SK-N-SH (cell line): ENCODE measurements at regions of chr11 and their contacts with region 1.

Region 1: DNA sequence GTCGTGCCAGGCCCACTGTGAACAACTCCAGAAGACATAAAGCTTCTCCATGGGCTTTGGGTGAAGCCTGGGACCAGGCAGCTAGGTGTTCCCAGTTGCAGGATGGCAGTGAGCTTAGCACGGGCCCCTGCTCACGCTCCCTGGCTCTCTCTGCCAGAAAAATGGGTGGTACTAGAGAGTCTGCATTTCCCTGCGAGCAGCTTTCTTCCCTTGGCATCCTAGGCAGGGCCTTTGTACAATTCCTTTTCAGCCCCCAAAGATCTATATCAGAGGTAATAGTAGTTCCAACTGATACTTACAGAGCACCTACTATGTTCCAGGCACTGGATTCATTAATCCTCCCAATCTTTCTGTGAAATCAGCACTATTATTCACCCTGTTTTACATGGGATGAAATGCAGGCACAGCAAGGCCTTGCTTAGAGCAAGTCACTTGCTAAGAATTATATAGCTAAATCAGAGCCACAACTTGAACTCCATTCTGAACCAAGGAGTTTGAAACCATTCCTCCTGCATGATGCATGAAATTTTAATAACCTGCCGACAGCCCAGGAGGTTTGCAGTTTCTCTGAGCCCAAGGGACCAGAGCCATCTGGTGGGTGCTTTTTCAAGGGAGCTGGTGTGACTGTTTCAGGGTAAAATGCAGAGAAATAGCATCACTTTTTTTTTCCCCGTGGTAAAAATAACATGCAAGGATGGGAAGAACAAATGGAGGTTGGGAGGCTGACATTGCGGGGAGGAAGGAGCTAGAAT is 22.7 kb downstream of the NAV2 start:
- DNase-seq: no peak
- H3K4me3 ChIP-seq: no peak overlapping the region
- H3K27ac ChIP-seq: peak overlapping the region; percentile 38 to 85
- H3K4me1 ChIP-seq: peaks cover 30 to 87% of the 10 kb centered on the region in 2 experiments
- H3K27me3 ChIP-seq: no peaks in the 10 kb centered on the region
- CTCF ChIP-seq: peak; percentile 50
- EP300 ChIP-seq: no peak; a peak in 1 of 4 replicates
- RAD21 ChIP-seq: peak; percentile 64

Region 2: GRCh38 chr11:19370100-19370861 is 365.1 kb before region 1 on chr11:
- CTCF ChIA-PET with region 1: no interaction called
- POLR2A ChIA-PET with region 1: no interaction called
- DNase-seq: no peak
- H3K4me3 ChIP-seq: no peak overlapping the region
- H3K27ac ChIP-seq: no peak overlapping the region
- H3K4me1 ChIP-seq: peaks cover 0 to 18% of the 10 kb centered on the region in 2 experiments; a peak in 1 of 4 replicates
- H3K27me3 ChIP-seq: no peaks in the 10 kb centered on the region
- CTCF ChIP-seq: no peak
- EP300 ChIP-seq: no peak
- RAD21 ChIP-seq: no peak

Region 3: GRCh38 chr11:19589567-19590260 is 145.6 kb before region 1 on chr11:
- CTCF ChIA-PET with region 1: no interaction called
- POLR2A ChIA-PET with region 1: no interaction called
- DNase-seq: no peak
- H3K4me3 ChIP-seq: no peak overlapping the region
- H3K27ac ChIP-seq: no peak overlapping the region
- H3K4me1 ChIP-seq: peaks cover 0 to 3% of the 10 kb centered on the region in 2 experiments; a peak in 2 of 4 replicates
- H3K27me3 ChIP-seq: no peaks in the 10 kb centered on the region
- CTCF ChIP-seq: no peak
- EP300 ChIP-seq: no peak
- RAD21 ChIP-seq: no peak

Region 4: GRCh38 chr11:19712281-19713220 is 22.8 kb before region 1 on chr11 and contains the start of gene NAV2:
- CTCF ChIA-PET with region 1: interaction called, 15 read pairs
- POLR2A ChIA-PET with region 1: interaction called, 12 read pairs
- DNase-seq: peak; percentile 93
- H3K4me3 ChIP-seq: peak within 1 kb of the TSS; percentile 80
- H3K27ac ChIP-seq: peak within 1 kb of the TSS; percentile 94 to 99
- H3K4me1 ChIP-seq: peaks cover 8 to 49% of the 10 kb centered on the region in 2 experiments
- H3K27me3 ChIP-seq: no peaks in the 10 kb centered on the region
- CTCF ChIP-seq: no peak
- EP300 ChIP-seq: 0 out of 4 replicates have a peak, but pooled peaks of 1 of the 2 experiments have one; percentile 54
- RAD21 ChIP-seq: no peak; the same call in 1 of the 2 replicates
- polyA plus RNA-seq, gene NAV2: 19.0 and 26.2 TPM in 2 replicates

Region 5: GRCh38 chr11:19769820-19770219 is 34.5 kb after region 1 on chr11:
- CTCF ChIA-PET with region 1: no interaction called
- POLR2A ChIA-PET with region 1: no interaction called
- DNase-seq: no peak
- H3K4me3 ChIP-seq: no peak overlapping the region
- H3K27ac ChIP-seq: no peak overlapping the region
- H3K4me1 ChIP-seq: peaks cover 0 to 60% of the 10 kb centered on the region in 2 experiments; a peak in 2 of 4 replicates
- H3K27me3 ChIP-seq: no peaks in the 10 kb centered on the region
- CTCF ChIP-seq: no peak
- EP300 ChIP-seq: no peak
- RAD21 ChIP-seq: no peak

Region 6: DNA sequence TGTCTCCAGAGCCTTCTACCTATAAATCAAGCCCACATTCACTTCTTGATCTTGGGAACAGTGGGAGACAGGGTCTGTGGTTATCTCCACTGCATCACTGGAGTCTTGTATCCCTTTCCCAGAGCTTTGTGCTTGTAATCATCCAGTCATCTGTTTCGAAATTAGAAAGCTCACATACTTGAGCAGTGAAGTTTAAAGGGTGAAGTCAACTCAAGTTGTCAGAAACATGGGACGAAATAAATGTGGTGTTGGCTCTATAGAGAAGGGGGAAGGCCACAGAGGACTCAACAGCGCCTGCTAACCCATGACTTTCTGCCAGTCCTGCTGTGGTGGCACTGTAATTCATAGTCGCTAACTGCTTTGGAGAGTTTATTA is 227.5 kb after region 1 on chr11:
- CTCF ChIA-PET with region 1: no interaction called
- POLR2A ChIA-PET with region 1: no interaction called
- DNase-seq: no peak
- H3K4me3 ChIP-seq: no peak overlapping the region
- H3K27ac ChIP-seq: peak overlapping the region in 1 of 2 experiments; percentile 78; a peak in 2 of 4 replicates
- H3K4me1 ChIP-seq: peaks cover 0 to 28% of the 10 kb centered on the region in 2 experiments; a peak in 1 of 4 replicates
- H3K27me3 ChIP-seq: no peaks in the 10 kb centered on the region
- CTCF ChIP-seq: no peak
- EP300 ChIP-seq: no peak
- RAD21 ChIP-seq: no peak